ENCODE measurements at regions of chr4 and their contacts with region 1.

Region 1: DNA sequence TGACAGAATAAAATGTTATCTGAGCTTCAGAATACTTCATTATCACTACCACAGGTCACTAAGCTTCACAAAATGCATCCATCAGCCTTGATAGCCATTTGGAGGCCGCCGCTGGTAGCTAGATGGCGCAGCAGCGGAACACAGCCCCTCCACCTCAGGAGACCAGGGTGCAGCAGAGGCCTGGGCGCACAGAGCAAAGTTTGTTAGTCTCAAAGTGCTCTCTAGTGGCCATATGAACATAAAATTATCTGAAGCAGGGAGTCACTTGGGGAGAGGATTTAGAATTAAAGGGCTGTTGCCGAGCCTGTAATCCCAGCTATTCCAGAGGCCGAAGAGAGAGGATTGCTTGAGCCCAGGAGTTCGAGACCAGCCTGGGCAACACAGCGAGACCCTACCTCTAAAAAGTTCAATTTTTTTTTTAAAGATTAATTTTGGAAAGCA is 8.1 kb upstream of the DCTD start:
- DNase-seq: peak; percentile 70
- H3K4me3 Mint-ChIP-seq: no peak overlapping the region
- H3K27ac Mint-ChIP-seq: no peak overlapping the region
- H3K4me1 Mint-ChIP-seq: no peaks in the 10 kb centered on the region
- H3K27me3 Mint-ChIP-seq: peaks cover 4% of the 10 kb centered on the region

Region 2: DNA sequence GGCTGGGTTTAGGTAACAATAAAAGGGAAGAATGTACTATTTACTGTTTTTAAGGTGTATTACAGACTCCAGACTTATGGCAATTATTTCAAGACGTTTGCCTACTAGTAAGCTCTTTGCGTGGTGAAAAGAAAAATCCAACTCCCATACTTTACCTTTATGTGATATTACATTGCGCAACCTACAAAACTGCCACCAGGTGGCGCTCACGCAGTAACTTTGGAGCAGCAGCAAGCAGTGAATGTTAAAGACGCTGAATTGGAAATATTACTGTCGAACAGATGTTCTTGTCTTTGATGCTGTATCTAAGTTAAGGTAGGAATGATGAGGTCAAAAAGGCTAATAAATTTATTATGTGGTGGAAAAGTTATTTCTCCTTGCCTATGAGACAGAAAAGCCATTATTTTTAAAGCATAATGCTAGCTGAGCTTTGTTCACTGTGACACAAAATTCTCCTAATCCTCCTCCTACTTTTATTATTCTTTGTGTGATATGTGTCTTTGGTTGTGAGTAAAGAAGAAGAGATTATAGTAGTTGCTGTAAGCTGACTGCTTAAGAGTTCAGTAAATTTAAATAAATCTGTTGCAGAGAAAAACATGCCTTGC is 1782.0 kb before region 1 on chr4:
- CTCF ChIA-PET with region 1: interaction called, 6 read pairs
- POLR2A ChIA-PET with region 1: no interaction called
- intact Hi-C with region 1: loop called (anchors 10 kb)
- DNase-seq: peak; percentile 75
- H3K4me3 Mint-ChIP-seq: no peak overlapping the region
- H3K27ac Mint-ChIP-seq: no peak overlapping the region
- H3K4me1 Mint-ChIP-seq: no peaks in the 10 kb centered on the region
- H3K27me3 Mint-ChIP-seq: no peaks in the 10 kb centered on the region

Region 3: DNA sequence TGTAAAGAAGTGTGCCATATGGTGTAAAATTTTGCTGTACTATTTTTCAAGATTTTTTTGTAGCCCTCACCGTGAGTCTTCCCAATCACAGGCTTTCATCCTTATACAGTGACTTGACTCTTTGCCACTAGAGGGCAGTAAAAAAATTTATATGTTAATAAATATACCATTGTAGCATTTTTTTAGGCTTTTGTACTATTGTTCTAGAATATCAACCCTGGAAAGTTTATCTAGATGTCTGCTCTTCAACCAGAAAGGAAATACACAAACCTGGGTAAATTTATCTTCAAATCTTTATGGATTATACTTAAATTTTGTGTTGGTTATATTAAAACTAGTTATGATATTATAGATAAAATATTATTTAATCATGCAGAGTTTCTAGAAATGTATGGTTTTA is 446.8 kb before region 1 on chr4:
- CTCF ChIA-PET with region 1: interaction called, 4 read pairs
- POLR2A ChIA-PET with region 1: no interaction called
- intact Hi-C with region 1: loop called (anchors 1 kb)
- DNase-seq: no peak
- H3K4me3 Mint-ChIP-seq: no peak overlapping the region
- H3K27ac Mint-ChIP-seq: no peak overlapping the region
- H3K4me1 Mint-ChIP-seq: no peaks in the 10 kb centered on the region
- H3K27me3 Mint-ChIP-seq: peaks cover 10% of the 10 kb centered on the region

Region 4: GRCh38 chr4:182684796-182685195 is 240.5 kb before region 1 on chr4:
- CTCF ChIA-PET with region 1: no interaction called
- POLR2A ChIA-PET with region 1: no interaction called
- intact Hi-C with region 1: no loop called
- DNase-seq: no peak
- H3K4me3 Mint-ChIP-seq: no peak overlapping the region
- H3K27ac Mint-ChIP-seq: no peak overlapping the region
- H3K4me1 Mint-ChIP-seq: no peaks in the 10 kb centered on the region
- H3K27me3 Mint-ChIP-seq: peaks cover 5% of the 10 kb centered on the region

Region 5: GRCh38 chr4:182806259-182807252 is 118.8 kb before region 1 on chr4:
- CTCF ChIA-PET with region 1: interaction called, 4 read pairs
- POLR2A ChIA-PET with region 1: no interaction called
- intact Hi-C with region 1: loop called (anchors 1 kb)
- DNase-seq: peak; percentile 77
- H3K4me3 Mint-ChIP-seq: peak overlapping the region; percentile 72
- H3K27ac Mint-ChIP-seq: no peak overlapping the region
- H3K4me1 Mint-ChIP-seq: peaks cover 5% of the 10 kb centered on the region
- H3K27me3 Mint-ChIP-seq: peaks cover 4% of the 10 kb centered on the region